Mammary epithelial cell (primary cell): ENCODE measurements at regions of chr14 and their contacts with region 1.

Region 1: GRCh38 chr14:58072288-58073071 is 79.5 kb downstream of the ARMH4 start:
- DNase-seq: peak; percentile 44
- H3K4me3 ChIP-seq: no peak overlapping the region
- H3K27ac ChIP-seq: no peak overlapping the region
- H3K4me1 ChIP-seq: peaks cover 13% of the 10 kb centered on the region
- H3K27me3 ChIP-seq: no peaks in the 10 kb centered on the region
- CTCF ChIP-seq: peak; percentile 61 to 73

Region 2: DNA sequence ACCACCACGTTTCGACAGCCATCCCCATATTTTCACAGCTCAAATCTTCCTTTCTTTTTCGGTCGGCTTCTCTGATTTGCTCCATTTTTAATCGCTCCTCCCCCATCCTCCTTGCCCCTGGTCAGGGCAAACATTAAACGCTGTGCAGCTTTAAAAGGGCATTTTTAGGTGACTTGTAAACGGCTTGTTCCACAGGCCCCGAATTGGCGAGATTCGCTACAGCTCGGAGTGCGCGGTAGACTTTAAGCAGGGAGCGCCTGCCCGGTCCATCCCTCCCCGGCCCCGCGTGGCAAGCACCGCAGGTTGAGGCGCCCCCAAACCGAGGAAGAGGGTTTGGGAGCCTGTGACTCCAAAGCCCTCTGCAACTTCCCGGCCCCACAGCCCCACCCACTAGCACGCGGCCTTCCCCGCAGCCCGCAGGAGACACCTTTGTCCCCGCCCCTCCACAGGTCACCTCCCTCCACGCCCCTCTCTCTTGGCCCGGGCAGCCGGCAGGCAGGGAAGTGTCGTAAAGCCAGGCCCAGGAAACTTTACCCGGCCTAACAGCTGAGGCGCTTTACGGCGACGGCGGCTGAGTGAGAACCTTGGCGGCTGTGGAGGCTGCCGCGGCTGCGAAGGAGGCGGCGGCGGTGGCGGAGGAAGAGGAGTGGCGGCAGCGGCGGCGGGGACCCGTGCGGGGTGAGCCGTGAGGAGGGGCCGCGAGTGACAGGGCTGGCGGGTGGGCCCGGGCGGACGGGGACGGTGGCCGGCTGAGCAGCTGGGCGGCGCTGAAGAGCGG is 682.3 kb before region 1 on chr14 and contains the start of gene NAA30:
- CTCF ChIA-PET with region 1: no interaction called
- dilution Hi-C with region 1: no loop called
- in situ Hi-C with region 1: no loop called
- intact Hi-C with region 1: loop called (anchors 10 kb)
- DNase-seq: peak; percentile 90
- H3K4me3 ChIP-seq: peak within 1 kb of the TSS; percentile 76 to 89 (median 79)
- H3K27ac ChIP-seq: peak within 1 kb of the TSS; percentile 58
- H3K4me1 ChIP-seq: peaks cover 6% of the 10 kb centered on the region
- H3K27me3 ChIP-seq: no peaks in the 10 kb centered on the region
- CTCF ChIP-seq: no peak
- total RNA-seq, gene NAA30: 22.9 to 28.2 TPM

Region 3: DNA sequence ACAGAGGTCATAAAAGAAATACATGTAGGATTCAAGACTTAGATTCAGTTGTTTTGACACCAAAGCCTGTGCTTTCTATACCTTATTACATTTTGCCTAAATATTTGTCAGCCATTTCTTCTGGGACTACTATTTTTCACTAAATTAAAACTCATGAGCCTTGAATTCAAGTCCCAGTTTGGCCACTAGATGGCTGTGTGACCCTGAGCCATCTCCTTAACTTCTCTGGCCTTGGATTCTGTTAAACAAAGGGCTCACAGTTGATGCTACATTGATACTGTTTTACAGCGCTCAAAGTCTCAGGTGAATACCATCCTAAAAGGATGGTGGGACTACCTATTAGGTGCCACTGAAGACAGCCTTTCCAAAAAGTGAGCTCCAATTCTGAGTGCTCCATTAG is 539.3 kb before region 1 on chr14:
- CTCF ChIA-PET with region 1: no interaction called
- dilution Hi-C with region 1: no loop called
- in situ Hi-C with region 1: no loop called
- intact Hi-C with region 1: loop called (anchors 1 kb)
- DNase-seq: no peak
- H3K4me3 ChIP-seq: no peak overlapping the region
- H3K27ac ChIP-seq: no peak overlapping the region
- H3K4me1 ChIP-seq: no peaks in the 10 kb centered on the region
- H3K27me3 ChIP-seq: no peaks in the 10 kb centered on the region
- CTCF ChIP-seq: peak; percentile 44 to 47

Region 4: GRCh38 chr14:57712102-57712501 is 360.4 kb before region 1 on chr14:
- CTCF ChIA-PET with region 1: no interaction called
- dilution Hi-C with region 1: no loop called
- in situ Hi-C with region 1: no loop called
- intact Hi-C with region 1: loop called (anchors 2 kb)
- DNase-seq: no peak
- H3K4me3 ChIP-seq: no peak overlapping the region
- H3K27ac ChIP-seq: no peak overlapping the region
- H3K4me1 ChIP-seq: peaks cover 4% of the 10 kb centered on the region
- H3K27me3 ChIP-seq: no peaks in the 10 kb centered on the region
- CTCF ChIP-seq: peak in 1 of 2 donors; percentile 50

Region 5: GRCh38 chr14:58663494-58664415 is 591.3 kb after region 1 on chr14:
- CTCF ChIA-PET with region 1: no interaction called
- dilution Hi-C with region 1: no loop called
- in situ Hi-C with region 1: no loop called
- intact Hi-C with region 1: no loop called
- DNase-seq: peak; percentile 61
- H3K4me3 ChIP-seq: no peak overlapping the region
- H3K27ac ChIP-seq: no peak overlapping the region
- H3K4me1 ChIP-seq: peaks cover 11% of the 10 kb centered on the region
- H3K27me3 ChIP-seq: no peaks in the 10 kb centered on the region
- CTCF ChIP-seq: no peak